Astrocyte of the cerebellum (primary cell): ENCODE measurements at regions of chr1 and their contacts with region 1.

Region 1: GRCh38 chr1:201999625-202000238 is 10.7 kb upstream of the ELF3 start:
- DNase-seq: peak; percentile 15
- H3K4me3 ChIP-seq: no peak overlapping the region
- CTCF ChIP-seq: peak; percentile 76

Region 2: DNA sequence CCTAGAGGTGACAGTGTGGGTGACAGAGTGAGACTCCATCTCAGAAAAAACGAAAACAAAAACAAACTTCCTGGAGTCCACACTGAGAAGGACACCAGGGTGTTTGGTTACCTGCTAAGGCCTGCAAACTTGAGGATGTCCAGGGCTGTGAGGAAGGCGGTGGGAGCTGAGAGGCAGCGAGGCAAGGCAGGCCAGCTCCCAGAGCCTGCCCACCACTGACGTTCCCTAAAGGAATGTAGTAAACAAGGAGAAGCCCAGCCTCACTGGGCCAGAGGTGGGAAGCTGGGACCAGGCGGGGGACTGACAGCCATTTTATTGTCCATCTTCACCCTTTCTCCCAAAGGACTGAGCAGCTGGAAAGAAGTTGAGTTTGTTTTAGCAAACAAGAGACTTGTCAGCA is 86.9 kb before region 1 on chr1:
- in situ Hi-C with region 1: loop called (anchors 5 kb)
- DNase-seq: no peak
- H3K4me3 ChIP-seq: no peak overlapping the region
- CTCF ChIP-seq: no peak

Region 3: GRCh38 chr1:202076050-202076511 is 76.3 kb after region 1 on chr1:
- in situ Hi-C with region 1: no loop called
- DNase-seq: no peak
- H3K4me3 ChIP-seq: no peak overlapping the region
- CTCF ChIP-seq: no peak

Region 4: GRCh38 chr1:202122639-202123335 is 123.1 kb after region 1 on chr1 and contains the start of gene GPR37L1:
- in situ Hi-C with region 1: no loop called
- DNase-seq: no peak
- H3K4me3 ChIP-seq: no peak within 1 kb of the TSS
- CTCF ChIP-seq: peak; percentile 52